ENCODE measurements at regions of chr3 and their contacts with region 1.

Region 1: DNA sequence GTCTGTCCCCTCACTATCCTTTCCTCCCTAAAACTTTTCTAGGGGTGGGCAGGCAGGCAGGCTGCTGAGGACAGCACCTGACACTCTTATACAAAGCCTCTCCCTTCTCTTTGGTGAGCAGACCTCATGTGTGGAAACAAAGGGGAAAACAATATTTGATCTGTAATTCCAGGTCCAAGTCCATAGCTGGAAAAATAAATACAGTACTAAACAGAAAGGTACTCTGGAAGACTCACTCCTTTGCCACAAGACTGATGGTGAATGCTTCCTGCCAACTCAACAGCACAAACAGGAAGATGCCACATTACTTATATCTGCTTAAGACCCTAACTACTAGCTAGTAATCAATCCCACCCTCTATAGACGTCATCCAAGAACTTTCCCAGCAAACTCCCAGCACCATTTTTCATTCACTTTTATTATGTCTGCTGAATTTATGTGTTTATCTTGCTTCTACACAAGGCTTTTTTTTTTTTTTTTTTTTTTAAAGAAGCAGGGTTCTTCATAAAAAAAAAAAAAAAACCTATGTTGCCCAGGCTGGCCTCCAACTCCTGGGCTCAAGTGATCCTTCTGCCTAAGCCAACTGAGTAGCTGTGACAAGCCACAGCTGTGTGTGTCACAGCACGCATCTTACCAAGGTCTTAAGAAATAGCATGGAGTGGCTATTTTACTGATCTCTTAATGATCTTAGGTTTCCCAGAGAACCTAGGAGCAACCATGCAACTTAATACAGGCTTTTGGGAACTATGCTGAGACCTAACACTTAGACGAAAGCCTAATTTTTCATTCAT is 44.2 kb upstream of the CSPG5 start:
- DNase-seq: no peak
- H3K4me3 Mint-ChIP-seq: no peak overlapping the region
- H3K27ac Mint-ChIP-seq: no peak overlapping the region
- H3K4me1 Mint-ChIP-seq: no peaks in the 10 kb centered on the region
- H3K27me3 Mint-ChIP-seq: no peaks in the 10 kb centered on the region
- CTCF ChIP-seq: no peak

Region 2: GRCh38 chr3:47496892-47497291 is 126.0 kb before region 1 on chr3:
- CTCF ChIA-PET with region 1: interaction called, 12 read pairs
- intact Hi-C with region 1: no loop called
- DNase-seq: no peak
- H3K4me3 Mint-ChIP-seq: no peak overlapping the region
- H3K27ac Mint-ChIP-seq: no peak overlapping the region
- H3K4me1 Mint-ChIP-seq: no peaks in the 10 kb centered on the region
- H3K27me3 Mint-ChIP-seq: no peaks in the 10 kb centered on the region
- CTCF ChIP-seq: no peak

Region 3: GRCh38 chr3:47594792-47595191 is 28.1 kb before region 1 on chr3:
- CTCF ChIA-PET with region 1: no interaction called
- intact Hi-C with region 1: no loop called
- DNase-seq: no peak
- H3K4me3 Mint-ChIP-seq: no peak overlapping the region
- H3K27ac Mint-ChIP-seq: no peak overlapping the region
- H3K4me1 Mint-ChIP-seq: no peaks in the 10 kb centered on the region
- H3K27me3 Mint-ChIP-seq: no peaks in the 10 kb centered on the region
- CTCF ChIP-seq: no peak